PC-3 (cell line): ENCODE measurements at regions of chr5 and their contacts with region 1.

Region 1: GRCh38 chr5:39714036-39714698 is 289.4 kb upstream of the DAB2 start:
- DNase-seq: peak; percentile 96
- ATAC-seq: peak; percentile 45
- H3K4me3 ChIP-seq: peak overlapping the region; percentile 8; the same call in 1 of the 2 replicates
- H3K27ac ChIP-seq: peak overlapping the region; percentile 97
- H3K4me1 ChIP-seq: peaks cover 44% of the 10 kb centered on the region
- H3K27me3 ChIP-seq: no peaks in the 10 kb centered on the region
- CTCF ChIP-seq: peak; percentile 80

Region 2: GRCh38 chr5:39640552-39640951 is 73.6 kb before region 1 on chr5:
- CTCF ChIA-PET with region 1: interaction called, 3 read pairs
- POLR2A ChIA-PET with region 1: no interaction called
- intact Hi-C with region 1: loop called (anchors 1 kb)
- DNase-seq: no peak
- ATAC-seq: no peak
- H3K4me3 ChIP-seq: no peak overlapping the region
- H3K27ac ChIP-seq: peak overlapping the region; percentile 93
- H3K4me1 ChIP-seq: peaks cover 41% of the 10 kb centered on the region
- H3K27me3 ChIP-seq: no peaks in the 10 kb centered on the region
- CTCF ChIP-seq: no peak

Region 3: DNA sequence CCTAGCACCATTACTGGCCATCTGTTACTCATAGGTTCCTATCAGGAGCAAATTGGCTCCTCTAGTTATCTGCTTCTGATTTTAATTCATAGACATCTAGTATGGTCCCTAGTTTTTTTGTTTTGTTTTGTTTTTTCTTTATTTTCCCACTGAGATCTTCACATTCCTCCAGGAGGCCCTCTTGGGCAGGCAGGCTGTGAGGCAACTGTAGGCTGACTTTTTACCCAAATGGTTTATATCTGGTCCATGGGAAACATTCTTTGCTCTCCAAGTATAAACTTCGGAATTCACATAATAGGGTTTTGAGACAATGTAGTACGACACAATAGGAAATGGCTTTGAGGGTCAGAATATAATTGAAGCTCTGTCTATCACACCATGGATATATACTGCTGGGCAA is 38.5 kb before region 1 on chr5:
- CTCF ChIA-PET with region 1: no interaction called
- POLR2A ChIA-PET with region 1: no interaction called
- intact Hi-C with region 1: loop called (anchors 1 kb)
- DNase-seq: no peak
- ATAC-seq: no peak
- H3K4me3 ChIP-seq: no peak overlapping the region
- H3K27ac ChIP-seq: no peak overlapping the region
- H3K4me1 ChIP-seq: peaks cover 38% of the 10 kb centered on the region
- H3K27me3 ChIP-seq: no peaks in the 10 kb centered on the region
- CTCF ChIP-seq: no peak

Region 4: GRCh38 chr5:40046792-40047191 is 332.6 kb after region 1 on chr5:
- CTCF ChIA-PET with region 1: no interaction called
- POLR2A ChIA-PET with region 1: no interaction called
- intact Hi-C with region 1: loop called (anchors 1 kb)
- DNase-seq: peak; percentile 93
- ATAC-seq: peak; percentile 92
- H3K4me3 ChIP-seq: 0 out of 2 replicates have a peak overlapping the region, but pooled peaks have one; percentile 2
- H3K27ac ChIP-seq: peak overlapping the region; percentile 93
- H3K4me1 ChIP-seq: peaks cover 30% of the 10 kb centered on the region
- H3K27me3 ChIP-seq: no peaks in the 10 kb centered on the region
- CTCF ChIP-seq: no peak

Region 5: GRCh38 chr5:40333459-40334244 is 619.5 kb after region 1 on chr5:
- CTCF ChIA-PET with region 1: no interaction called
- POLR2A ChIA-PET with region 1: no interaction called
- intact Hi-C with region 1: loop called (anchors 10 kb)
- DNase-seq: peak; percentile 85
- ATAC-seq: peak; percentile 91
- H3K4me3 ChIP-seq: peak overlapping the region; percentile 1; the same call in 1 of the 2 replicates
- H3K27ac ChIP-seq: peak overlapping the region; percentile 79
- H3K4me1 ChIP-seq: peaks cover 20% of the 10 kb centered on the region
- H3K27me3 ChIP-seq: no peaks in the 10 kb centered on the region
- CTCF ChIP-seq: no peak

Region 6: DNA sequence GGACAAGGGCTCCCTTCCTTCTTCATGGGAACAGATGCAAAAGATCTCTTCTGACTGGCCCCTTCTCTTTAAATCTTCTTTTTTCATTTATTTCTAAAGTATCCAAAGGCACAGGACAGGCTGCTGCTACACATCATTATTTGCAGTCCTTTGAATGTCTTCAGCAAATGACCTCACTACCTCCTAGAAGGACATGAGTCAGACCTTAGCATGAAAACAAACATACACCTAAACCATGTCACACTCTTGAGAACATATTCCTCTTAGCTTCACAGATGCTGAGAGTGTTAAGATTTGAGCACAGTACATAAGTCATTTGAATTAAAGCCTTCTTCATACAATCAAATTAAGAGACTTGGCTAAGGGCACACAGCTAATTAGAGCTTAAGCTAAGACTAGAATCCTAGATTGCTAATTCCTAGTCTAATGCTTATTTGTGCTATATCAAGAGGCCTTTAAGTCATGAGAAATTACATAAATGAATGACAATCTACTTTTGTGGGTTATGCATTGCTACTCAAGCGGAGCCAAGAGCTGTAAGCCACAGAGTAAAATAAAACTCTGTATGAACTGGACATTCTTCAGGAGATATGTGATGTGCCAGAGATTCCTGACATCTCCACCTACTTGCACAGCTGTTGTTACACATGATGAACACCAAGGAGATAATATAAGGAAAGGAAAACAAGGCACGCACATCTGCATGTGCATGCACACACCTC is 856.4 kb after region 1 on chr5:
- CTCF ChIA-PET with region 1: no interaction called
- POLR2A ChIA-PET with region 1: no interaction called
- intact Hi-C with region 1: loop called (anchors 10 kb)
- DNase-seq: peak; percentile 82
- ATAC-seq: peak; percentile 100
- H3K4me3 ChIP-seq: no peak overlapping the region
- H3K27ac ChIP-seq: peak overlapping the region; percentile 39
- H3K4me1 ChIP-seq: peaks cover 18% of the 10 kb centered on the region
- H3K27me3 ChIP-seq: no peaks in the 10 kb centered on the region
- CTCF ChIP-seq: no peak

Region 7: DNA sequence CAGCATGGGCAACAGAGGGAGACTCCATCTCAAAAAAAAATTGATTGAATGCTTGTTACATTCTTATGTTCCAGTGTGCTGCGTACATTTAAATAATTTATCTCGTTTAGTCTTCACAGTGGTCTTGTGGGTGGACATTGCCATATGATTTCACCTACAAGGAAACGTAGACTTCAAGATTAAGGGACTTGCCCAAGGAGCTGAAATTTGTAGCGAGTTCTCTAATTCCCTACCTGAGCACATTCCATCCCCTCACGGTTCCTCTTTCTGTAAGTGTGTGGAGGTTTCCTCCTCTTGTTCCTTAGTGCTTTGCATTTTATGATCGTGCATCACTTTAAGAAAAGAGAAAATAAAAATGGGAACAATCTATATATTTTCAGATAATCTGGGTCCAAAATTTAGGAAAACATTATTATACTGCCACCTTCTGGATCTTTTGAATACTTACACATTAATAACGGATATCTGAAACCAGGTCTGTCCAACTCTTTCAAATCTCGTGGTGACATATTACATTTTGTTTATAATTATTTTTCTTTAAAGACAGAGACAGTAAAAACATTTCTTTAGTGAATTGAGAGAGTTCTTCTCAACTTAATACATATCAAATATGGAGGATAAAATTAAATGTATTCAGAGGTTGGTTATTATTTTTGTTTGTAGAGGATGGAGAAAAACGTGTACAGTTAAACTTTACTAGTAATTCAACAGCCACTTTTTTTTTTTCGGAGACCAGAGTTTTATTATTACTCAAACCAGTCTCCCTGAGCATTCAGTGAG is 1165.2 kb after region 1 on chr5:
- CTCF ChIA-PET with region 1: no interaction called
- POLR2A ChIA-PET with region 1: no interaction called
- intact Hi-C with region 1: loop called (anchors 5 kb)
- DNase-seq: peak; percentile 66
- ATAC-seq: peak; percentile 60; the same call in 1 of the 2 replicates
- H3K4me3 ChIP-seq: no peak overlapping the region
- H3K27ac ChIP-seq: no peak overlapping the region
- H3K4me1 ChIP-seq: no peaks in the 10 kb centered on the region
- H3K27me3 ChIP-seq: no peaks in the 10 kb centered on the region
- CTCF ChIP-seq: peak; percentile 87